AG04449 (cell line): ENCODE measurements at regions of chr14 and their contacts with region 1.

Region 1: GRCh38 chr14:99604283-99604765 is 317 bp upstream of the CCDC85C start:
- DNase-seq: no peak
- H3K4me3 ChIP-seq: peak overlapping the region; percentile 67
- CTCF ChIP-seq: no peak

Region 2: DNA sequence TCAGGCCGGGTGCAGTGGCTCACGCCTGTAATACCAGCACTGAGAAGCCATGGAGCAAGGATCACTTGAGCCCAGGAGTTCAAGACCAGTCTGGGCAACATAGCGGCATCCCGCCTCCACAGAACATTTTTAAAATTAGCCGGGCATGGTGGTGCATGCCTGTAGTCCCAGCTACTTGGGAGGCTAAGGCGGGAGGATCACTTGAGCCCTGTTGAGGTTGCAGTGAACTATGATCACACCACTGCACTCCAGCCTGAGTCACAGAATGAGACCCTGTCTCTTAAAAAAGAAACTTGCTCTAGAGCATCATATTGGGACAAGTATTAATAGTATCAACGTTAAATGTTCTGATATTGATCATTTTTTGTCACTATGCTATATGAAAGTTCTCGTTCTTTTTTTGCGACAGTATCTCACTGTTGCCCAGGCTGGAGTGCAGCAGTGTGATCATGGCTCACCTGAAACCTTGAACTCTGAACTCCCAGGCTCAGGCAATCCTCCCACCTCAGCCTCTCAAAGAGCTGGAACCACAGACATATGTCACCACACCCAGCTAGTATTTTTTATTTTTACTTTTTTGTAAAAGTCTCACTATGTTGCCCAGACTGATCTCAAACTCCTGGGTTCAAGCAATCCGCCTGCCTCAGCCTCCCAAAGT is 48.1 kb before region 1 on chr14:
- CTCF ChIA-PET with region 1: no interaction called
- POLR2A ChIA-PET with region 1: no interaction called
- DNase-seq: no peak
- H3K4me3 ChIP-seq: no peak overlapping the region
- CTCF ChIP-seq: no peak

Region 3: DNA sequence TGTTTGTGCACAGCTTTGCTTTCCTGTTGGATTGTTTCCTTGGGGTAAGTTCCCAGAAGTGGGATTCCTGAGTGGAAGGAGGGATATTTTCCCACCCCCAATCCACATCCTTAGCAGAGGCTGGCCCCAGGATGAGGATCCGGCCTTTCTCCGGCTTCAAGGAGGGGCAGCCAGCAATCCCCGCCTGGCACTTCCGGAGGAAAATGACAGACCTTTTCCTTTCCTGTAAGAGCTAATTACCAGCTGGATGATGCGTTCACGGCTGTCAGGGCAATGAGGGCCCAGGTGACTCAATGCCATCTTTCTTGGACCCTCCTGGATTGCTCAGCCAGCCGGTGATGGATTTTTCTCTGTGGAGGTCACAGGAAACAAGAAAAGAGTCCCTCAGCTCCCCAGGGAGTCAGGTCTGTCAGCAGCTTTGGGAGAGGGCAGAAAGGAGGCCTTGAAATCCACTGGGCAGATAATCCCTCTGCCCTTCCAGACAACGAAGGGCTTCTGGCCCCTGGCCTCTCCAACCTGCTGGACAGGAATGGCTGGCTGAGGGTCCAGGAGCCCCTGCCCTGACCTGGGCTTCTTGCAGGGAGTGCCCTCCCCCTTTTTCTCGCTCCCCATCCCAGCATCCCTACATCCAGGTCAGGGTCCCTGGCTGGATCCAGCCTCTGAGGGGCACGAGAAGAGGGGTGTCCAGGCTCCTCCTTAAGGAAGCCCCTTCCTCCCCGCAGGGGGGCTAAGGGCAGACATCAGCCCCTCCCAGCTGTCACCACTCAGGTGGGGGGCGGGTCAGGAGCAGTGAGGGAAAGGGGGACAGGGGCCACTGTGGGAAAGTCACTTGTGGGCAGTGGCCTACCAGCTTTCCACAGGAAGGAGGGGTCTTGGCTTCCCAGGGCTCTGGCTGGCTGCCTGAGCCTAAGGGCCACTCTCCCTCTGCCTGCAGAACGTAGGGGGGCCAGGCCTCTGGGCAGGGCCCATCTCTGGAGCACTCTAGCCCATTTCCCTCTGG is 15.8 kb after region 1 on chr14:
- CTCF ChIA-PET with region 1: interaction called, 91 read pairs
- POLR2A ChIA-PET with region 1: interaction called, 18 read pairs
- DNase-seq: no peak
- H3K4me3 ChIP-seq: no peak overlapping the region
- CTCF ChIP-seq: no peak

Region 4: DNA sequence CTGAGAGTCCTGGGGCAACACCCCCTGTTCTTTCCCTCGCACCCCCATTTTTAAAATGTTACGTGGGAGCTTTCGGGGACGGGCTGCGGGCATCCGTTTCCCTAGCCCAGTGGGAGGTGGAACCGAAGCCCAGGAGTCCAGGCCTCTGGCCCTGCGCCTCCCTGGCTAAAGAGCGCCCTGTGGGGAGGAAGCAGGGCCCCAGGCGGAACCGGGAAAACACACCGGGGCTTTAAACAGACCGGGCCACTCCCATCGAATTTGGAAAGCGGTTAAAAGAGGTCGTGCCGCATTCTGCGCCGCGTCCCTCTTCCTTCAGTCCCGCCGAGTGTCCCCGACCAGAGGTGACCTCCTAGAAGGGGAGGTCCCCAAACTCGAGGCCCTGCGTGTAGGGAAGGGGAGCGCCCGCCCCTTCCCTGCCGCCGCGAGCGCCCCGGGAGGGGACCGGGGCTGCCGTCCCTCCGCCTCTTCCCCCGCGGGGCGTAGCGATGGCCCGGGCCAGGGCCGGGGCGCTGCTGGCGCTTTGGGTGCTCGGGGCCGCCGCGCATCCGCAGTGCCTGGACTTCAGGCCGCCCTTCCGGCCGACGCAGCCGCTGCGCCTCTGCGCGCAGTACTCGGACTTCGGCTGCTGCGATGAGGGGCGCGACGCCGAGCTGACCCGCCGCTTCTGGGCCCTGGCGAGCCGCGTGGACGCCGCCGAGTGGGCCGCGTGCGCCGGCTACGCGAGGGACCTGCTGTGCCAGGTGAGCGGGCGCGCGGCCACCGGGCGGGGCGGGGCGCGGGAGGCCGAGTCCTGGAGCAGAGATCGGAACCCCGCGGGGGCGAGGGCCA is 40.6 kb after region 1 on chr14 and contains the start of gene HHIPL1:
- CTCF ChIA-PET with region 1: no interaction called
- POLR2A ChIA-PET with region 1: no interaction called
- DNase-seq: no peak
- H3K4me3 ChIP-seq: peak within 1 kb of the TSS; percentile 49
- CTCF ChIP-seq: no peak

Region 5: GRCh38 chr14:99683619-99684355 is 79.5 kb after region 1 on chr14 and contains the start of gene CYP46A1:
- CTCF ChIA-PET with region 1: no interaction called
- POLR2A ChIA-PET with region 1: no interaction called
- DNase-seq: peak; percentile 92
- H3K4me3 ChIP-seq: peak within 1 kb of the TSS; percentile 80
- CTCF ChIP-seq: no peak

Region 6: GRCh38 chr14:99768381-99768780 is 164.1 kb after region 1 on chr14:
- CTCF ChIA-PET with region 1: no interaction called
- POLR2A ChIA-PET with region 1: no interaction called
- DNase-seq: no peak
- H3K4me3 ChIP-seq: no peak overlapping the region
- CTCF ChIP-seq: no peak